Tibial artery (tissue), 4 donors: ENCODE measurements at regions of chr19 and their contacts with region 1.

Region 1: DNA sequence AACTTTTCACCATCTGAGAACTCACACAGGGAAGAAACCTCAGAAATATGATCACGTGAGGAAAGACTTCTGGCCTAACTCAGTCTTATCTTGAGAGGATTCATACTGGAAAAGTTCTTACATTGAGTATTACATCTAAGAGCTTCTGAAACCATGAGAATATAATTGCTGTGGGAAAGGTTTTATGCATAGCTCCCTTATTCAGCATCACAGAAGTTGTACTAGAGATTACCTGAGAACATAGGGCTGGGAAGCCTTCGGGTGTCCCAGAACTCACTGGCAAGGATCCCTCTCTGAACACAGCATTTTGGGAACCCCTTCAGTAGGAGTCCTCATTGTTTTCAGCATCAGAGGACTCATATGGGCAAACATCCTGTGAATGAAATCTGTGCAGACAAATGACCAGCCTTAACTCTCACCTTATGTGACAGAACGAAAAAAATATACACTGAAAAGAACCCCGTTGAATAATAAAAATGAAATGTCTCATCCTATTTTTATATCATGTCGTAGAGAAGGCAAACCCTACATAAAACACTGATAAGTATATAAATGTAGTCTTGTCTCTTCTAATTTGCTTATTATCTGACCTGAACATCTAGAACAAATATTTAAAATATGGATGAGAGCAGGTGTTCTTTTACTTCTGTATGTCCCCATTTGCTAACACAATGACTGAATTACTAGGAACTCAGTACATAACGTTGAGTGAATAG is 14.2 kb downstream of the ZNF274 start:
- DNase-seq: no peak
- H3K4me3 ChIP-seq: no peak overlapping the region
- H3K27ac ChIP-seq: no peak overlapping the region
- H3K4me1 ChIP-seq: no peaks in the 10 kb centered on the region
- H3K27me3 ChIP-seq: no peaks in the 10 kb centered on the region
- CTCF ChIP-seq: no peak

Region 2: DNA sequence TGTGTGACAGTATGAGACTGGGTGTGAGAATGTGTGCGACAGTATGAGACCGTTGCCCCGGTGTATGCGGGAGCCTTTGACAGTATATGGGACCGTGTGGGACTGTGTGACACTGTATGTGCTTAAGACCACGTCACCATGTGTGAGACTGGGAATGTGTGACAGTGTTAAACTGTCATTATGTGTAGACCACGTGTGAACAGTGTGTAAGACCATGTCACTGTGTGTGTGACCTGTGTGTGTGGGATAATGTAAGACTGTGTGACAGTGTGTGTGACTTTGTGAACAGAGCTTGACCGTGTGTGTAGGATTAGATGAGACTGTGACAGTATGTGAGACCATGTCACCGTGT is 1792.4 kb before region 1 on chr19:
- intact Hi-C with region 1: loop called (anchors 5 kb)
- DNase-seq: no peak
- H3K4me3 ChIP-seq: peak overlapping the region; percentile 63 to 70
- H3K27ac ChIP-seq: peak overlapping the region in 1 of 2 donors; percentile 95
- H3K4me1 ChIP-seq: peaks cover 0 to 15% (median 9%) of the 10 kb centered on the region in 4 donors
- H3K27me3 ChIP-seq: no peaks in the 10 kb centered on the region
- CTCF ChIP-seq: no peak

Region 3: GRCh38 chr19:58182989-58183816 is 13.9 kb before region 1 on chr19 and contains the start of gene ZNF274:
- intact Hi-C with region 1: no loop called
- DNase-seq: peak; percentile 87 to 94
- H3K4me3 ChIP-seq: peak within 1 kb of the TSS; percentile 71 to 88
- H3K27ac ChIP-seq: peak within 1 kb of the TSS; percentile 92 to 98
- H3K4me1 ChIP-seq: peaks cover 0 to 8% (median 4%) of the 10 kb centered on the region in 4 donors
- H3K27me3 ChIP-seq: no peaks in the 10 kb centered on the region
- CTCF ChIP-seq: no peak